HepG2 (cell line): ENCODE measurements at regions of chr5 and their contacts with region 1.

Region 1: DNA sequence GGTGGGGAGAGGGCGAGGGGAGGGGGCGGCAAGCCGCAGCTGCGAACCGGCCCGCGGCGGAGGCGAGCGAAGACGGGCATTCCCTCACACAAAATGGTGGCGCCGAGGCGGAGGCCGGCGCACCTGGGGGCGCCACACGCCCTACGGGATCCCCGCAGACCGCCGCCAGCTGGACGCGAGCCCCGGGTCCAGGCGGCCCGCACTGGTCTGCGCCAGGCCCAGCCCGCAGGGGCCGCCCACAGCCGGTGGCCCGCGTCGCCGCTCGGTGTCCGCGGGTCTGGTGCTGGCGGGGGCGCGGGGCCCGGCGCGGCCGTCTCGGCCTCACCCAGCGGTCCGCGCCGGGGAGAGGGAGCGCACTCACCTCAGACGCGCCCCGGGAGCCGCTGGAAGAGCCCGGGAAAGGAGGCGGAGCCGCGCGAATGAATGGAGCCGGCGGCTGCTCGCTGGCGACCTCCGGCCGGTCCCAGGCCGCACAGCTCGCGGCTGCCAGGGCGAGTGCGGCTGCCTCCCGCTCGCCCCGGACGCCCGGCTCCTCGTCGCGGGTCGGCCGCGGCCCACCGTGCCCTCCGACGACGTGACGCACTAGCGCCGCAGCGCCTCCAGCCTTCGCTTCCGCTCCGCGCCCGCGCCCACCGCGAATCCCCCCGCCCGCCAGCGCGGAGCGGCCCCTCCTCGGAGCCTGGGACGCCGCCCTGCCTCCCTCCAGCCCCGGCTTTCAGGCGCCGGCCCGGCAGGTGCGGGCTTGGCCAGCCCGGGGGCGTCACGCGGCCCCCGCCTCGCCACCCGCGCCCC is at the start of gene FAM169A:
- DNase-seq: no peak
- ATAC-seq: peak; percentile 65
- H3K4me3 ChIP-seq: peak within 1 kb of the TSS; percentile 87 to 97 (median 95)
- H3K27ac ChIP-seq: peak within 1 kb of the TSS; percentile 96
- H3K4me1 ChIP-seq: peaks cover 77% of the 10 kb centered on the region
- H3K27me3 ChIP-seq: no peaks in the 10 kb centered on the region; a peak in 1 of 5 replicates
- CTCF ChIP-seq: peak; percentile 30; the same call in 1 of the 2 replicates
- EP300 ChIP-seq: no peak
- POLR2A ChIP-seq: peak in 1 of 2 experiments; percentile 54; a peak in 2 of 4 replicates
- RAD21 ChIP-seq: peak; percentile 53
- total RNA-seq, gene FAM169A: 84.8 and 110 TPM in 2 replicates

Region 2: GRCh38 chr5:74877624-74878304 is 11.8 kb after region 1 on chr5:
- CTCF ChIA-PET with region 1: no interaction called
- POLR2A ChIA-PET with region 1: interaction called, 79 read pairs
- in situ Hi-C with region 1: no loop called
- intact Hi-C with region 1: loop called (anchors 1 kb)
- DNase-seq: peak; percentile 90
- ATAC-seq: peak; percentile 77
- H3K4me3 ChIP-seq: peak overlapping the region in 2 of 3 experiments; percentile 14 to 42; a peak in 4 of 6 replicates
- H3K27ac ChIP-seq: peak overlapping the region; percentile 96
- H3K4me1 ChIP-seq: peaks cover 74% of the 10 kb centered on the region
- H3K27me3 ChIP-seq: no peaks in the 10 kb centered on the region
- CTCF ChIP-seq: no peak
- EP300 ChIP-seq: peak in 1 of 2 experiments; percentile 93; a peak in 2 of 4 replicates
- POLR2A ChIP-seq: peak; percentile 24 to 36; a peak in 1 of 4 replicates
- RAD21 ChIP-seq: no peak

Region 3: DNA sequence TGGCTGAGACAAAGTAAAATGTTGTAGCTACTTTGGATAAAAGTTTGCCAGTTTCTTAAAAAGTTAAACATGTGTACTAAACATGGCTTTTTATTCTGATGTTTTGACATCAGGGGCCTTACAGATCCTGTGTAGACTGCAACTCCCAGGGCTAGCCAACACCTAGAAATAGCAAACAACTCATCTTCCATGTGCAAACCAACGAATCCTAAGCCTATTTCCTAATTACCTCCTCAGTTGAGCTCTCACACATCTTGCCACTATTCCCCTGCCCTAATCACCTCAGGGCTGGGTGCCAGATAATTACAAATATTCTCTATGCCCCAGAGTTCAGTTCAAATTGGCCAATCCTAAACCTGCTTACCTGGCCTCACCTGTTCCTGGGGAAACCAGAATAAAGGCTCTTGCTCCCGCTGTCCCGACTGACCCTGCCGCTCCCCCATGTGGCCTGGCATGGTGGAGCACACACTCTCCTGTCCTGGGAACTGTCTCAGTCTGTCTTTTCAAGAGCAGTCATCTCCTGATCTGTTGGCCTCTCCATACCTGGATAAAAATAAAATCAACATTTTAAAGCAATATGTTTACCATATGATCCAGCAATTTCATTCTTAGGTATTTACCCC is 37.3 kb after region 1 on chr5:
- CTCF ChIA-PET with region 1: no interaction called
- POLR2A ChIA-PET with region 1: no interaction called
- in situ Hi-C with region 1: loop called (anchors 5 kb)
- intact Hi-C with region 1: loop called (anchors 5 kb)
- DNase-seq: peak; percentile 66
- ATAC-seq: peak; percentile 100
- H3K4me3 ChIP-seq: no peak overlapping the region
- H3K27ac ChIP-seq: no peak overlapping the region
- H3K4me1 ChIP-seq: peaks cover 6% of the 10 kb centered on the region; the same call in 1 of the 2 replicates
- H3K27me3 ChIP-seq: no peaks in the 10 kb centered on the region
- CTCF ChIP-seq: peak; percentile 95
- EP300 ChIP-seq: no peak
- POLR2A ChIP-seq: no peak
- RAD21 ChIP-seq: peak; percentile 95